PC-3 (cell line): ENCODE measurements at regions of chr10 and their contacts with region 1.

Region 1: GRCh38 chr10:61486738-61487396 is 33.7 kb upstream of the TMEM26 start:
- DNase-seq: peak; percentile 66
- ATAC-seq: no peak; the same call in 1 of the 2 replicates
- H3K4me3 ChIP-seq: no peak overlapping the region
- H3K27ac ChIP-seq: peak overlapping the region; percentile 0; the same call in 1 of the 2 replicates
- H3K4me1 ChIP-seq: peaks cover 14% of the 10 kb centered on the region
- H3K27me3 ChIP-seq: no peaks in the 10 kb centered on the region
- CTCF ChIP-seq: no peak

Region 2: DNA sequence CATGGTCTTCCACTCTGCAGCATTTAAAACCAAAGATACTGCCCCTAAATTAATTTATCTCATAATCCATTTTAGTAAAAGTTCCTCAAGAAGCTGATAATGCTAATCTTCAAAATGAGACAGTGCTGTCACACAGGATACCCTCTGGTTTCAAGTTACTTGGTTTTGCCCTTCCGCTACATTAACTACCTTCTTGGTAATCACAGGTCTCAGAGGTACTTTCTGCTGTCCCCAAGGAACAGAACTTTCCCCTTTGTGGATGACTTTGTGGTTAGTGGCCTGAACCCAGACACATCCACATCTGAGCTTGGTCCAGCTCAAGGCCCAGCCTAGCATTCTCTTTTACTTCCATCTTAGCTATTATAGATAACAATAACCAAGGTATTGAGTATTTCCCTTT is 55.1 kb after region 1 on chr10:
- CTCF ChIA-PET with region 1: no interaction called
- POLR2A ChIA-PET with region 1: interaction called, 11 read pairs
- intact Hi-C with region 1: no loop called
- DNase-seq: no peak
- ATAC-seq: no peak
- H3K4me3 ChIP-seq: no peak overlapping the region
- H3K27ac ChIP-seq: no peak overlapping the region
- H3K4me1 ChIP-seq: no peaks in the 10 kb centered on the region
- H3K27me3 ChIP-seq: no peaks in the 10 kb centered on the region
- CTCF ChIP-seq: no peak